Naive thymus-derived CD4-positive, alpha-beta T cell (primary cell): ENCODE measurements at regions of chr11 and their contacts with region 1.

Region 1: DNA sequence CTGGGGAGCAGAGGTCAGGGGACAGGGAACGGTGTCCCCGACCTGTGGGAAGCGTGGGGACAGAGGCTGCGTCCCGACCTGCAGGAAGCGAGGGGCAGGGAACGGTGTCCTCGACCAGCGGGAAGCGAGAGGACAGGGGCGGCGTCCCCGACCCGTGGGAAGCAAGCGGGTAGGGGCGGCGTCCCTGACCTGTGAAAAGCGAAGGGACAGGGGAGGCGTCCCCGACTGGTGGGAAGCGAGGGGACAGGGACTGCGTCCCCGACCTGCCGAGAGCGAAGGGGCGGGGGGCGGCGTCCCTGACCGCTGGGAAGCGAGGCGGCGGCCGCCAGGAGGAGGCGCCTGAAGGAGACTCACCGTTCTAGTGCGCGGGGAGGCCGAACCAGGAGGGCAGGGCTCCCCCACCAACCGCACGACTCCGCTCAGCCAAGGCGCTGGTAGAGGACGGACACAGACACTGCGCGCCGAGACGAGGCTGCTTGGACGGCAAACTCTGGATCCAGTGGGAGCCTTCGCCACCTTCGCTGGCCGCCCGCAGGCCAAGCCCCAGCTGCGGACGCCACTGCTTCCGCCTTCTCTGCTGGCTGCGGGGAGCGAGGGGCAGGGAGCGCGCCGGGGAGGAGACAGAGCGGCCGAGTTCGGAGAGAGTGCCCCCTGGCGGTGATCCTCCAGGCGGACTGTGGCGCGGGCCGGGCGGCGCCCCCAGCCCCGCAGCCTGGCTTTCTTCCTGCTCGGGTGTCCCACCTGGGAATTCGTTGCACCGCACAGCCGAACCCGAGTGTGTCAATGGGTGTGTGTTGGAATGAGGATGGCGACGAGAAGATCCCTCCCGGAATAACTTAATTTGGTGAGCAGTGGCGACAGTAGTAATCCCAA is at the start of gene TRAF6:
- DNase-seq: peak; percentile 75 to 95 (median 87)
- ATAC-seq: peak; percentile 99
- H3K4me3 ChIP-seq: peak within 1 kb of the TSS; percentile 82
- H3K4me3 Mint-ChIP-seq: peak within 1 kb of the TSS; percentile 89 to 99 (median 97)
- H3K27ac ChIP-seq: peak within 1 kb of the TSS; percentile 84
- H3K27ac Mint-ChIP-seq: peak within 1 kb of the TSS; percentile 87 to 98 (median 94)
- H3K4me1 ChIP-seq: peaks cover 5 to 13% of the 10 kb centered on the region in 2 donors
- H3K4me1 Mint-ChIP-seq: peaks cover 21 to 42% (median 31%) of the 10 kb centered on the region in 7 donors
- H3K27me3 ChIP-seq: no peaks in the 10 kb centered on the region
- H3K27me3 Mint-ChIP-seq: peaks cover 3 to 23% (median 9%) of the 10 kb centered on the region in 5 donors
- total RNA-seq, gene TRAF6: 14.7 to 22.2 (median 20.6) TPM

Region 2: GRCh38 chr11:35662649-35663407 is 847.1 kb before region 1 on chr11 and contains the start of gene TRIM44:
- CTCF ChIA-PET with region 1: no interaction called
- POLR2A ChIA-PET with region 1: no interaction called
- intact Hi-C with region 1: loop called in 1 of 2 experiments (anchors 2 kb)
- DNase-seq: peak; percentile 69 to 85 (median 82)
- ATAC-seq: peak; percentile 89
- H3K4me3 ChIP-seq: peak within 1 kb of the TSS; percentile 94
- H3K4me3 Mint-ChIP-seq: peak within 1 kb of the TSS; percentile 91 to 99 (median 95)
- H3K27ac ChIP-seq: peak within 1 kb of the TSS; percentile 94
- H3K27ac Mint-ChIP-seq: peak within 1 kb of the TSS; percentile 90 to 100 (median 96)
- H3K4me1 ChIP-seq: peaks cover 21 to 22% of the 10 kb centered on the region in 2 donors
- H3K4me1 Mint-ChIP-seq: peaks cover 24 to 61% (median 55%) of the 10 kb centered on the region in 7 donors
- H3K27me3 ChIP-seq: no peaks in the 10 kb centered on the region
- H3K27me3 Mint-ChIP-seq: peaks cover 0 to 22% (median 5%) of the 10 kb centered on the region in 5 donors
- total RNA-seq, gene TRIM44: 35.7 to 60.8 (median 58.6) TPM

Region 3: DNA sequence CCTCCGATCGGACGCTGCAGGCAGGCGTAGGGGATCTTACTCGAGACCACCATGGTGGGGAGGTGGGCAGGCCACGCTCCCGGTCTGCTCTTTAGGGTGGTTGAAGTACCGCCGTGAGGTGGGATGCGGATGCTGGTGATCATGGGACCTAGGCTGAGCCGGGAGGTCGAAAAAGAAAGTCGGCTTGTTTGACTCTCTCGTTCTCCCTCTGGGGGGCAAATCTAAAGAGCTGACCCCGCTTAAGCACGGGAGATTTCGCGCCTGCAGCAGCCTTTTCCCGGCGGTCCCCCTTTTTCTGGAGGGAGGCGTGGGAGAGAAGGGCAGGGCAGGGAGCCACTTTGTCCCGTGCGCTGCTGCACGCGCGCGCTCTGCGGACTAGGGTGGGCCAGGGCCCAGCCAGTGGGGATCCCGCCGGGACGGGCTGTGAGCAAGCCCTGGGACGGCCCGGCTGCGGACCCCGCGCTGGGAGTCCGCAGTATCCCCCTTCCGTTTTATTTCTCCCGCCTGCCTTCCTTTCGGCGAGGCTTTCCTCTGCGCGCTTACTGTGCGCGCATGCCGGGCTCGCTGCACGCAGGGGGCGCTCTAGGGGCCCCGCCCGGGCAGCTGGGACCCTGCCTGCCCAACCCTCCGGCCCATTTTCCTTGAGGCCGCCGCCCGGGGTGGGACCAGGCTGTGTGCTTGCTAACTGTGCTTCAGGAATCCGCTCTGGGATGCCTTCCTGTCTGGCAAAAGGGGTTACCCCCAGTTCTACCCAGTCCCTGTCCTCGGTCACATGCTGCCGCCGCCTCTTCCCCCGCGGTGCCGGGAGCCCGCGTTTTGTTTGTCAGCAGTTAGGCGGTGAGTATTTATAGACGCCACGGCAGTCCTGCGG is 132.8 kb before region 1 on chr11:
- CTCF ChIA-PET with region 1: no interaction called
- POLR2A ChIA-PET with region 1: no interaction called
- intact Hi-C with region 1: loop called in 1 of 2 experiments (anchors 1 kb)
- DNase-seq: peak in 3 of 9 donors; percentile 12 to 76 (median 26)
- ATAC-seq: peak; percentile 81
- H3K4me3 ChIP-seq: peak overlapping the region; percentile 71
- H3K4me3 Mint-ChIP-seq: peak overlapping the region; percentile 52 to 98 (median 74)
- H3K27ac ChIP-seq: no peak overlapping the region
- H3K27ac Mint-ChIP-seq: peak overlapping the region in 2 of 9 donors; percentile 41 to 85
- H3K4me1 ChIP-seq: peaks cover 0 to 19% of the 10 kb centered on the region in 2 donors
- H3K4me1 Mint-ChIP-seq: peaks cover 6 to 49% (median 22%) of the 10 kb centered on the region in 7 donors
- H3K27me3 ChIP-seq: peaks cover 0 to 5% of the 10 kb centered on the region in 2 donors
- H3K27me3 Mint-ChIP-seq: peaks cover 37 to 67% (median 65%) of the 10 kb centered on the region in 5 donors

Region 4: GRCh38 chr11:36541001-36541400 is 31.1 kb after region 1 on chr11:
- CTCF ChIA-PET with region 1: no interaction called
- POLR2A ChIA-PET with region 1: no interaction called
- intact Hi-C with region 1: loop called in 1 of 2 experiments (anchors 1 kb)
- DNase-seq: peak in 1 of 9 donors; percentile 32
- ATAC-seq: peak; percentile 67
- H3K4me3 ChIP-seq: no peak overlapping the region
- H3K4me3 Mint-ChIP-seq: no peak overlapping the region
- H3K27ac ChIP-seq: no peak overlapping the region
- H3K27ac Mint-ChIP-seq: no peak overlapping the region
- H3K4me1 ChIP-seq: no peaks in the 10 kb centered on the region
- H3K4me1 Mint-ChIP-seq: peaks cover 0 to 8% (median 0%) of the 10 kb centered on the region in 7 donors
- H3K27me3 ChIP-seq: no peaks in the 10 kb centered on the region
- H3K27me3 Mint-ChIP-seq: peaks cover 0 to 31% (median 22%) of the 10 kb centered on the region in 5 donors

Region 5: DNA sequence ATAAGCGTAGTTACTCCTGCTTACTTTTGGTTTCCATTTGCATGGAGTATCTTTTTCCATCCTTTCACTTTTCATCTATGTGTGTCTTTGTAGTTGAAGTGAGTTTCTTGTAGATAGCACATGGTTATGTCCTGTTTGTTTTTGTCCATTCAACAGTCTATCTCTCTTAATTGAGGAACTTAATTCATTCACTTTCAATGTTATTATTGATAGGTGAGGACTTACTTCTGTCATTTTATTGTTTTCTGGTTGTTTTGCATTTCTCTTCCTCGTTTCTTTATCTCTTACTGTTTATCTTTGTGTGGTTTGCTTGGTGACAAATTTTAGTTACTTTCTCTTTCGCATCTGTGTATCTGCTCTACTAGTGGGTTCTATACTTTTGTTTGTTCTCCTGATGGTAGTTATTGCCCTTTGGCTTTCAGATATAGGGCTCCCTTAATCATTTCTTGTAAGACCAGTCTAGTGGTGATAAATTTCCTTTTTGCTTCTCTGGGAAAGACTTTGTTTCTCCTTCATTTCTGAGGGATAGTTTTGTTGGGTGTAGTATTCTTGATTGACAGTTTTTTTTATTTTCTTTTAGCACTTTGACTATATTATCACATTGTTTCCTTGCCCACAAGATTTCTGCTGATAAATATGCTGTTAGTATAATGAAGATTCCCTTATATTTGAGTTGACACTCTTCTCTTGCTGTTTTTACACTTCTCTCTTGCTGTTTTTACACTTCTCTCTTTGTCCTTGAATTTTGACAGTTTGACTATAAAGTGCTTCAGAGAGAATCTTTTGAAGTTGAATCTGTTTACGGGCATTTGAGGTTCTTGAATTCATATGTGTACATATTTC is 48.9 kb after region 1 on chr11:
- CTCF ChIA-PET with region 1: no interaction called
- POLR2A ChIA-PET with region 1: no interaction called
- intact Hi-C with region 1: loop called in 1 of 2 experiments (anchors 5 kb)
- DNase-seq: no peak
- ATAC-seq: peak; percentile 76
- H3K4me3 ChIP-seq: no peak overlapping the region
- H3K4me3 Mint-ChIP-seq: peak overlapping the region in 7 of 10 donors; percentile 3 to 74 (median 32)
- H3K27ac ChIP-seq: no peak overlapping the region
- H3K27ac Mint-ChIP-seq: peak overlapping the region in 2 of 9 donors; percentile 0 to 90
- H3K4me1 ChIP-seq: peaks cover 0 to 18% of the 10 kb centered on the region in 2 donors
- H3K4me1 Mint-ChIP-seq: peaks cover 0 to 27% (median 14%) of the 10 kb centered on the region in 7 donors
- H3K27me3 ChIP-seq: no peaks in the 10 kb centered on the region
- H3K27me3 Mint-ChIP-seq: peaks cover under 1 to 21% (median 10%) of the 10 kb centered on the region in 5 donors

Region 6: GRCh38 chr11:36605221-36606216 is 95.6 kb after region 1 on chr11:
- CTCF ChIA-PET with region 1: no interaction called
- POLR2A ChIA-PET with region 1: no interaction called
- intact Hi-C with region 1: no loop called
- DNase-seq: no peak
- ATAC-seq: no peak
- H3K4me3 ChIP-seq: no peak overlapping the region
- H3K4me3 Mint-ChIP-seq: no peak overlapping the region
- H3K27ac ChIP-seq: no peak overlapping the region
- H3K27ac Mint-ChIP-seq: no peak overlapping the region
- H3K4me1 ChIP-seq: no peaks in the 10 kb centered on the region
- H3K4me1 Mint-ChIP-seq: no peaks in the 10 kb centered on the region
- H3K27me3 ChIP-seq: no peaks in the 10 kb centered on the region
- H3K27me3 Mint-ChIP-seq: peaks cover 0 to 31% (median 29%) of the 10 kb centered on the region in 5 donors

Region 7: GRCh38 chr11:36746886-36747710 is 237.2 kb after region 1 on chr11:
- CTCF ChIA-PET with region 1: no interaction called
- POLR2A ChIA-PET with region 1: no interaction called
- intact Hi-C with region 1: loop called in 1 of 2 experiments (anchors 1 kb)
- DNase-seq: peak; percentile 45 to 84 (median 68)
- ATAC-seq: peak; percentile 100
- H3K4me3 ChIP-seq: no peak overlapping the region
- H3K4me3 Mint-ChIP-seq: no peak overlapping the region
- H3K27ac ChIP-seq: no peak overlapping the region
- H3K27ac Mint-ChIP-seq: no peak overlapping the region
- H3K4me1 ChIP-seq: no peaks in the 10 kb centered on the region
- H3K4me1 Mint-ChIP-seq: peaks cover 0 to 9% (median 3%) of the 10 kb centered on the region in 7 donors
- H3K27me3 ChIP-seq: no peaks in the 10 kb centered on the region
- H3K27me3 Mint-ChIP-seq: peaks cover 21 to 30% (median 25%) of the 10 kb centered on the region in 5 donors